Mammary epithelial cell (primary cell): ENCODE measurements at regions of chr6 and their contacts with region 1.

Region 1: GRCh38 chr6:20877008-20877937 is 343.0 kb downstream of the CDKAL1 start:
- DNase-seq: peak; percentile 98
- H3K4me3 ChIP-seq: no peak overlapping the region
- H3K27ac ChIP-seq: peak overlapping the region; percentile 88
- H3K4me1 ChIP-seq: peaks cover 27% of the 10 kb centered on the region
- H3K27me3 ChIP-seq: no peaks in the 10 kb centered on the region
- CTCF ChIP-seq: no peak

Region 2: DNA sequence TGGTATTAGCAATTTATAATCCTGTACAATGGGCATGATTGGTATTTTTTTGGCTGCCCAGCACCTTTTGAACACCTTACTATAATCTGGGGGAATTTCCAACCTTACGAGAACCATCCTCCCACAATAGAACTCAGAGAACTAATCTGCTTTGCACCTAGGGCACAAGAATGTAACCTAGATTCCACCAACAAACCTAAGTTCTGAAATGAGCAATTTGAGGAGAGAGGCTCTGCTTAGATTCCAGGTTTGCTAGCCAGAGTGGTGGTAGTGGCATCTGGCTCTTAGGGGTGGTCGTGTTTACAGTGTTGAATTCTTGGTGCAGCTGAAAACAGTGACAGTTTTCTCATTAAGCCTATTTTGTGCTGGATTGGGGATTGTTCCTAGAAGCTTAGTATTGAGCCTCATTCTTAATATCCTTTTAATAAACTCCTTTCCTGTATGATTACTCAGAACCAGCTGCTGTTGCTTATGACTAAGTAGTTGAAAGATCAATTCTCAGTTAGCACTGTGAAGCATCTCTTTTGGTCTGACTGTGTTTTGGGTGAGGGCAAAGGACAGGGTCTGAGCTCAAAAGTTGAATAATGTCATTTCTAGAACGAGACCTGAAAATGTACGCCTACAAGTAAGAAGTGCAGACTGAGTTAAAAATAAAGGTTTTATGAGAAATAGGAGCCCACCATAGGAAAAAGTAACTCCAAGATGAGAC is 42.6 kb after region 1 on chr6:
- CTCF ChIA-PET with region 1: no interaction called
- dilution Hi-C with region 1: loop called (anchors 5 kb)
- in situ Hi-C with region 1: no loop called
- intact Hi-C with region 1: no loop called
- DNase-seq: peak; percentile 16
- H3K4me3 ChIP-seq: no peak overlapping the region
- H3K27ac ChIP-seq: no peak overlapping the region
- H3K4me1 ChIP-seq: no peaks in the 10 kb centered on the region
- H3K27me3 ChIP-seq: no peaks in the 10 kb centered on the region
- CTCF ChIP-seq: no peak

Region 3: DNA sequence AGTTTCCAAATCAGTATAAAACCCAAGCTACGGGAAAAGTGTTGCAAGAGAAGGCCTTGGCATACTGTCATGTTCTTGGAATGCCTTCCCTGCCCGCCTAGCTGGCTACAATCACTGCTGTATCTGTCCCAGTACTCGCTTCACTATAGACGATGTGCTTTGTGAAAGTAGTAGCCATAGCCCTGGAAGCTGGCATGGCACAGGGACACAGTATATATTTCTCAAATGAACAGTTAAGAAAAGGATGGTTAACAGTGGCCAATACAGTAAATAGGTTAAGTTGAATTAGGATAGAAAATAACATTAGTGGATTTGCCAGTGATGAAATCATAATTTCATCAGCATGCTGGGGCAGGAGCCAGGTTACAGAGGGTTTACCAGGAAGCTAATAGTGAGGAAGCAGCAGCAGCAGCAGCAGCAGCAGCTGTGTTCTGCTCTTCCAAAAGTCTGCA is 156.3 kb after region 1 on chr6:
- CTCF ChIA-PET with region 1: no interaction called
- dilution Hi-C with region 1: no loop called
- in situ Hi-C with region 1: no loop called
- intact Hi-C with region 1: loop called (anchors 1 kb)
- DNase-seq: peak; percentile 83
- H3K4me3 ChIP-seq: peak overlapping the region; percentile 9 to 38 (median 25)
- H3K27ac ChIP-seq: peak overlapping the region; percentile 91
- H3K4me1 ChIP-seq: peaks cover 21% of the 10 kb centered on the region
- H3K27me3 ChIP-seq: no peaks in the 10 kb centered on the region
- CTCF ChIP-seq: no peak

Region 4: GRCh38 chr6:21331235-21331634 is 454.0 kb after region 1 on chr6:
- CTCF ChIA-PET with region 1: no interaction called
- dilution Hi-C with region 1: no loop called
- in situ Hi-C with region 1: no loop called
- intact Hi-C with region 1: loop called (anchors 5 kb)
- DNase-seq: no peak
- H3K4me3 ChIP-seq: no peak overlapping the region
- H3K27ac ChIP-seq: no peak overlapping the region
- H3K4me1 ChIP-seq: no peaks in the 10 kb centered on the region
- H3K27me3 ChIP-seq: peaks cover 2% of the 10 kb centered on the region
- CTCF ChIP-seq: no peak

Region 5: DNA sequence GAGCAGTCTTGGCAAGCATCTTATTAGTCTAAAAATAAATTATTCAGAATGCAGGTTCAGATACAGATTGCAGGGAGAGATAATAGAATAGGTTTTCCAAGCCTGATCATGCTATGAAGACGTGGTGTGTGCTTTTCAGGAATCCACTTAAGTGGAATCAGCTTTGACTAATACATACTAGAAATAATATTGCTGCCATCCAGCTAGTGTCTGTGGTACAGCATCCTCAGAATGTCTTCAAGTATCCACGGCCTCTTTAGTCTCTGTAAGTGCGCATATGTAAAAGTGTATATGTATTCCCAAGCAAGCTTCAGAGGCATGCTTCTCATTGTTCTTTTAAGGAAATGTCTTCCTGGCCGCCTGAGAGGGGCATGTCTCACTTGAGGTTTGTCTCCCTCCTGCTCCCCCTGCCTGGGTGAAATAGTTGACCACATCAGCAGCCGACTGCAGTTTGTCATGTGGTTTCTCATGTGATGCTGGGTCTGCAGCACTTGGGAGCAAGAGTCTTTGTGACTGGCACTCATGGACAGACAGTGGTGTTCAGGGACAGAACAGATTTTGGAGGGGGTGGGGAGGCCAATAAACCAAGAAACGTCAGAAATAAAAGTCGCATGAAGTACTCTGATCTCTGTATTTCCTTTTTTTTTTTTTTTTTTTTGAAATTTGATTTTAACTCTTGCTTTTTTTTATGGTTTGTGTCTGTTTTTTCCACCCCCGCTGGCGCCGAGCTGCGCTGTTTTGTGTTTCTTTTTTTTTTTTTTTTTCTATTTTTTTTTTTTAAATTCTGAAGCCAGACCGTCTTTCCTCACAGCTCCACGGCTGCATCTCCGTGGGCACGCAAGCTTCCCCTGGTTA is 1268.8 kb after region 1 on chr6:
- CTCF ChIA-PET with region 1: no interaction called
- dilution Hi-C with region 1: no loop called
- in situ Hi-C with region 1: no loop called
- intact Hi-C with region 1: loop called (anchors 10 kb)
- DNase-seq: peak; percentile 17
- H3K4me3 ChIP-seq: no peak overlapping the region
- H3K27ac ChIP-seq: no peak overlapping the region
- H3K4me1 ChIP-seq: peaks cover 5% of the 10 kb centered on the region
- H3K27me3 ChIP-seq: no peaks in the 10 kb centered on the region
- CTCF ChIP-seq: peak in 1 of 2 donors; percentile 42